ENCODE measurements at regions of chr5 and their contacts with region 1.

Region 1: DNA sequence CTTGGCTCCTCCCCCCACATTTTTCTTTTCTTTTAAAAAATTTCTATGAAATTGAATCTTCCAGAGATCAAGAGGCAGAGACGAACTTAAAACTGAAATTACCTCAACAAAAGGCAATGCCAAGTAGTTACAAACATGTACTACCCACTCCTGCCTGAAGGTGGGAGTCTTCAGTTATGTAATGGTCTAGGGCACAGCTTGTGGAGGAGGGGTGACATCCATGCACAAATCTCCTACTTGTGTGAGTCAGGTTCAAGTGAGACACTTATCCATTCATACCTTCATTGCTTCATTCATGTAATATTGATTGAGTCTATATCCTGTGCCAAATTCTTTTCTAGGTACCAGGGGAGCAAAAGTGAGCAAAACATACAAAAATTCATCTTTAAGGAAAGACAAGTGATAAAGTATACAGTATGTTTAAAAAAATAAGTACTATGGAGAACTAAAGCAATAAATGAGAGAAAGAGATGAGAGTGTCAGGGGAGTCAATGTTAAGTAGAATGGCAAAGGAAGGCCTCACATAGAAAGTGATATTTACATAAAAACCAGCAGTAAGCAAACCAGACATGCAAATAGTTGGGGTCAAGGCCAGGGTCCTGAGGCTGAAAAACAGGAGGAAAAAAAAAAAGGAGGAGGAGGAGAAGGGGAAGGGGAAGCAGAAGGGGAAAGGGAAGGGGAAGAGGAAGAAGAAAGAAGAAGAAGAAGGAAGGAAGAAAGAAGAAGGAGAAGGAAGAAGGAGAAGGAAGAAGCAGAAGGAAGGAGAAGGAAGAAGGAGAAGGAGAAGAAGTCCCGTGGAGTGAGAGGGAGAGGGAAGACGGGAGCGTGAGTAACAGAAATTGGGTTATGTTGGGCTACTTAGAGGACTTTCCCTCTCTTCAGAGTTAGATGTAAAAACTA is 24.9 kb upstream of the NSG2 start:
- DNase-seq: peak; percentile 53
- ATAC-seq: peak; percentile 91
- H3K4me3 ChIP-seq: no peak overlapping the region
- H3K27ac ChIP-seq: no peak overlapping the region
- H3K4me1 ChIP-seq: no peaks in the 10 kb centered on the region
- H3K27me3 ChIP-seq: peaks cover 39% of the 10 kb centered on the region
- CTCF ChIP-seq: peak; percentile 59 to 76 (median 73)
- POLR2A ChIP-seq: no peak
- RAD21 ChIP-seq: peak; percentile 80

Region 2: DNA sequence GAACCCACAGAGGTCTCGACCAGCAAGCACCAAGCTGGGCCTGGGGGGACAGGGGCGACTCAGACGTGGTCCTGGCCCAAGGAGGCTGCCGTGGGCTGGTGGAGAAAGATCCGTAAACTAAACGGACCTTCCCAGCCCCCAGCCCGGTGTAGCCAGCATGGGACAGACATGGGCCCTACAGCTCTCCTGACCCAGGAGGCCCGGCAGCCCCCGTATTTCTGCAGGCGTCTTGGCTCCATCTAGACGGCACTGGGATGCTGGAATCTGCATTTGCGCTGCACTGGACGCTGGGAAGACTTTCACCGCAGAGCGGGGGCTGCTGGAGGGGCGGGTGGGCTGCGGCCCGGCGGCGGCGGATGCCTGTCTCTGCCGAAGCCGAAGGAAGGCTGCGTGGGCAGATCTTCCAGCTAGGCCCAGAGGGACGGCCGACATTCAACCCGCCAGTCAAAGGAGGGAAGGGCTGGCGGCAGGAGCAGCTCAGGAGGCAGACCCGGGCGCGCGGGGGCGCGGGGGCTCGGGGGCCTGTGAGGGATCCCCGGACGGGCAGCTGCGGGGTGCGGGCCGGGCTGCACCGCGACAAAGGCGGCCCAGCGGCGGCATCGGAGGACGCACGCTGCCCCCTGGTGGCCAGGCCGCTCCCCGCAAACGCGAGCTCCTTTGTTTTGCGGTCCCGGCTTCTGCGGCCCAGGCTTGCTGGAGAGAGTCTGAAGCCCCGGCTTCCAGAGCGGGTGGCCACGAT is 291.1 kb after region 1 on chr5:
- CTCF ChIA-PET with region 1: interaction called, 6 read pairs
- POLR2A ChIA-PET with region 1: no interaction called
- RAD21 ChIA-PET with region 1: no interaction called
- intact Hi-C with region 1: loop called (anchors 1 kb)
- DNase-seq: no peak
- ATAC-seq: peak; percentile 92
- H3K4me3 ChIP-seq: no peak overlapping the region
- H3K27ac ChIP-seq: no peak overlapping the region
- H3K4me1 ChIP-seq: no peaks in the 10 kb centered on the region; a peak in 1 of 4 replicates
- H3K27me3 ChIP-seq: peaks cover 4% of the 10 kb centered on the region; the same call in 1 of the 2 replicates
- CTCF ChIP-seq: peak; percentile 64 to 73 (median 70)
- POLR2A ChIP-seq: no peak
- RAD21 ChIP-seq: peak; percentile 89